GM12878 (cell line): ENCODE measurements at regions of chr1 and their contacts with region 1.

Region 1: GRCh38 chr1:156728597-156729462 is at the start of gene ISG20L2:
- DNase-seq: peak; percentile 92
- ATAC-seq: peak; percentile 85
- H3K4me3 ChIP-seq: peak within 1 kb of the TSS; percentile 100
- H3K27ac ChIP-seq: peak within 1 kb of the TSS; percentile 91
- H3K4me1 ChIP-seq: peaks cover 9% of the 10 kb centered on the region
- H3K27me3 ChIP-seq: no peaks in the 10 kb centered on the region
- CTCF ChIP-seq: no peak; a peak in 1 of 6 replicates
- EP300 ChIP-seq: peak in 1 of 2 experiments; percentile 14; a peak in 1 of 4 replicates
- POLR2A ChIP-seq: peak; percentile 92
- RAD21 ChIP-seq: no peak
- polyA plus RNA-seq, gene ISG20L2: 16.4 to 26.1 TPM

Region 2: DNA sequence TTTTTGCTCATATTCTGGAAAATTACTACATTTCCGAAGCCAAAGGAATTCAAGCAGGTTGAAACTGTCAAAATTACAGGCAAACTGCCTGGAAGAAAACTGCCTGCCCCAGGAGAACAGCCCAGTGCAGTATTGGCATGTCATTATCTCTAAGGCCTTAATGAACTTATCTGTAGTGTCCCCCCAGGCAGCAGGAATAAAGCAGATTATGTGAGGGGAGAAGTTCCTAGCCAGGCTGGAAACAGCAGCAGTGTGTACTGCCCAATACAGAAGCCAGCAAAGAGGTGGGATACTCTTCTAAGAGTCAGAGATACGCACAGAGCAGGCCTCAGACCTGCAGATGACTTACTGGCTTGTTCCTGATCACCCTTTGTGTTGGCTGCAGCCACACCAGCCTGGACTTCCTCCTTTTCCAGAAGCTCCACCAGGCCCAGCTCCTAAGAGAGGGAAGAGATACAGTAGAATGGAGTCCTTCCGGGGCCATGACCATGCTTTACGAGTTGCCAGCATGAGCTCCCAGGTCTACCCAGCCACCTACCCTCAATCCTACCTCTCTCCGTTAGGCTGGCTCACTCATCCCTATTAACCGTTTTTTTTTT is 168.1 kb before region 1 on chr1:
- CTCF ChIA-PET with region 1: no interaction called
- POLR2A ChIA-PET with region 1: no interaction called
- RAD21 ChIA-PET with region 1: no interaction called
- SMC1A ChIA-PET with region 1: no interaction called
- in situ Hi-C with region 1: no loop called
- intact Hi-C with region 1: no loop called
- DNase-seq: no peak
- ATAC-seq: no peak
- H3K4me3 ChIP-seq: no peak overlapping the region
- H3K27ac ChIP-seq: no peak overlapping the region
- H3K4me1 ChIP-seq: no peaks in the 10 kb centered on the region
- H3K27me3 ChIP-seq: no peaks in the 10 kb centered on the region
- CTCF ChIP-seq: no peak
- EP300 ChIP-seq: no peak
- POLR2A ChIP-seq: no peak
- RAD21 ChIP-seq: no peak

Region 3: DNA sequence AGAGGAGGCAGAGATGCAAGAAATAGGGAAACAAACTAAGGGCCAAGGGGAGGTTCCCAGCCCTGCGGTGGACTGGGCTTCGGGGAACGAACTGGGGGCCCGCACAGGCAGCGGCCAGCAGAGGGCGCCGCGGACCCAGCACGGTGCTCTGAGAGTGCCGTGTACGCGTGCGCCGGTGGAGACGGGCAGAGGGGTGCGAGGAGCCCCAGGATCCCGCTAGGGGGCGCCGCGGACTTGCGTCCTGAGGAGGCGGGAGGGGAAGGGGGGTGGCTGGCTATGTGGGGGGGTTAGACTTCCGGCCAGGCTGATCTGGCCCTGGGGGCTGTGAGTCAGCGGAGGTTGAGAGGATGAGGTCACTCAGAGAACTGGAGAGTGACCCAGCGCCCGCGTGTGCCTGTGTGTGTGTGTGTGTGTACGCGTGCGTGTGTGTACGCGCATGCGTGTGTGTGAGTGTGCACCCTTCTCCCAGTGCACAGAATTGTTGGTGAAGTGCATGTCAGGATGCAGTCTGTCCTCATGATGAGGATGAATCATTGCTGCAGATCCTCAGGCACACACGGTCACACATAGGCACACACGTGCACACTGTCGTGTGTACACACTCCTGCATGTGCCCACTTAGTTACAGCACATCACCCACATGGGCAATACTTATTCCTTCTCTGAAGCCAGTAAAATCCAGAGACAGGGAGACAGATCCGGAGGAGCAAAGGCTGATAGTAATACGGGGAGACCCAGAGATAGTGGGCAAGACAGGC is 68.7 kb before region 1 on chr1:
- CTCF ChIA-PET with region 1: interaction called, 101 read pairs
- POLR2A ChIA-PET with region 1: interaction called, 13 read pairs
- RAD21 ChIA-PET with region 1: interaction called, 39 read pairs
- SMC1A ChIA-PET with region 1: interaction called, 39 read pairs
- in situ Hi-C with region 1: no loop called
- intact Hi-C with region 1: loop called (anchors 10 kb)
- DNase-seq: peak; percentile 70
- ATAC-seq: peak; percentile 84
- H3K4me3 ChIP-seq: peak overlapping the region; percentile 94
- H3K27ac ChIP-seq: peak overlapping the region; percentile 90
- H3K4me1 ChIP-seq: peaks cover 74% of the 10 kb centered on the region
- H3K27me3 ChIP-seq: 0 out of 4 replicates have a peak, but pooled peaks cover 0 to 2% of the 10 kb centered on the region in 2 experiments
- CTCF ChIP-seq: peak; percentile 99 to 100 (median 100); a peak in 5 of 6 replicates
- EP300 ChIP-seq: no peak
- POLR2A ChIP-seq: peak; percentile 69
- RAD21 ChIP-seq: peak; percentile 81

Region 4: DNA sequence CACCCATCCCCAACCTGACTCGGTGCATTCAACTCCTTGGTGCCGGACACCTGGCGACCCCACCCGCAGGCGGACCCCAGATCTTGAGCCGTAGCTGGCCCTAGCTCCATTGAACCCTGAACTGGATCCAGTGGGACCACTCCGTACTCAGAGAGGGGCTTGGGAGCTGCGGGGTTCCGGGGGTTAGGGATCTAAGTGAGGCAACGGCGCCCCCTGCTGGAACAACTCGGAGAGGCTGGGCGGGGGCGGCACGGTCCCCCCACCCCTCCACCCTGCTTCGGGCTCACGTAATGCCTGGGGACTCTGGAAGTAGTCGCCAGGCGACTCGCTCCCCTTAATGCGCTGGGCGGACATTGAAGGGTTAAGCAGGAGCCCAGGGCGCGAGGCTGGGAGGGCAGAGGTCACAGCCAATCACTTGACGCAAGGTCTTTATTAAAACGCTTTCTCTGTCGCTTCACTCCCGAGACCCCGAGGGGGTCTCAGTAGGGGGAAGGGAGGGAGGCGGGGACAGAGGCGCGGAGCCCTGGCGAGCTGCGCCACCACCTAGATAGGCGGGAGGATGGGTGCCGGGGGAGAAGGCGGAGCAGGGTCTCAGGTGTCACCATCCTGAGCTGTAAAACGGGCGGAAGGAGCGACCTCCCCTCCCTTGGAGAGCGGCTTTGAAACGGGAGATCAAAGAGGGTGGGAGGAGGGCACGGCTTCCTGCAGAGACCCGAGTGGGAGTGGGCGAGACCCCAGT is 22.7 kb before region 1 on chr1:
- CTCF ChIA-PET with region 1: interaction called, 53 read pairs
- POLR2A ChIA-PET with region 1: interaction called, 4 read pairs
- RAD21 ChIA-PET with region 1: interaction called, 15 read pairs
- SMC1A ChIA-PET with region 1: interaction called, 8 read pairs
- in situ Hi-C with region 1: no loop called
- intact Hi-C with region 1: no loop called
- DNase-seq: no peak
- ATAC-seq: peak; percentile 81
- H3K4me3 ChIP-seq: peak overlapping the region; percentile 35; the same call in 1 of the 2 replicates
- H3K27ac ChIP-seq: no peak overlapping the region
- H3K4me1 ChIP-seq: peaks cover 6% of the 10 kb centered on the region
- H3K27me3 ChIP-seq: peaks cover 10 to 15% of the 10 kb centered on the region in 2 experiments
- CTCF ChIP-seq: peak; percentile 60 to 74 (median 67)
- EP300 ChIP-seq: no peak
- POLR2A ChIP-seq: peak; percentile 11; the same call in 1 of the 2 replicates
- RAD21 ChIP-seq: peak; percentile 53

Region 5: DNA sequence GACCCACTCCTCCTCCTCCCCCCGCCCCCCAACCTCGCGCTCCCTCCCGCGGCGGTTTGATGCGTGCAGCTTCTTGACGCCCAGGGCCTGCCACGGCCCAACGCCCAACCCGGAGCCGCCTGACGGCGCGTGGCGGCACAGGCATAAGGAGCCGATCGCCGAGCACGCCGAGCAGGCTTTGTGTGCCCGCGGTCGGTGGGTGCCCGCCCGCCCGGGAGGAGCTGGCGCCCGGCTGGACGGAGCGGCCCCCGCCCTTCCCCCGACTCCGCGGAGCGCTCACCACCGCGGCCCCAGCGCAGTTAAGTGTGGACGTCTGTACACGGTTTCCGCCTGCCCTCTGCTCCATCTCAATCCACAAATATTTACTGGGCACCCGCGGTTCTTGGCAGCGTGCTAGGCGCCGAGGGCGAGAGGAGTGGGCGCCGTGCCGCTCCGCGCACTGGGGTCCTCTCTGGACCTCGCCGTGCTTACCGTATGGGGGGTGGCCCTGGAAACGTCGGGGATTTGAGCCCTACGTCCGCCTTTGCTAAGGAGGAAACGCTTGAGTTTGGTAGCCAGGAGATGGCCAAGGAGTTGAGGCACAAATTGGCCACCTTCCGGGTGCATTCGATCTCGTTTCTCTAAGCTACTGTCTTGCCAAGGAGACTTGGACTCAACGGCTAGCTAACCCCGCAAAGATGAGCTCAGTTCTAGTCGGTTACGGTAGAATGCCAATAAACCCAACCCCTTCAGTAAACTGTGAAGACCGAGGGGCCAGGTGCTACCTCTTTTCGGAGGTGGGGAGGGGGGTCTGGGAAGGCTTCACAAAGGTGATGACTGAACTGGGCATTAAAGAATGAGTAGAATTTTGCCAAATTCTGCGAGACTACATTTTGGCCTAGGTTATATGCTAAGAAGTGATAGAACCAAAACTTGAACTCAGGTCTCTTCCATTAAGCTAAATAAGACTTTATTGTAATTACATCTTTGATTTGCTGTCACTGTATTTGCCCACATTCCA is 23.2 kb after region 1 on chr1:
- CTCF ChIA-PET with region 1: interaction called, 56 read pairs
- POLR2A ChIA-PET with region 1: interaction called, 45 read pairs
- RAD21 ChIA-PET with region 1: interaction called, 34 read pairs
- SMC1A ChIA-PET with region 1: interaction called, 43 read pairs
- in situ Hi-C with region 1: no loop called
- intact Hi-C with region 1: loop called (anchors 2 kb)
- DNase-seq: peak; percentile 82
- ATAC-seq: peak; percentile 80
- H3K4me3 ChIP-seq: peak overlapping the region; percentile 81
- H3K27ac ChIP-seq: peak overlapping the region; percentile 99
- H3K4me1 ChIP-seq: peaks cover 25% of the 10 kb centered on the region
- H3K27me3 ChIP-seq: no peaks in the 10 kb centered on the region
- CTCF ChIP-seq: 0 out of 6 replicates have a peak, but pooled peaks of 1 of the 3 experiments have one; percentile 3
- EP300 ChIP-seq: no peak
- POLR2A ChIP-seq: peak; percentile 84
- RAD21 ChIP-seq: no peak

Region 6: GRCh38 chr1:156797212-156797871 is 68.5 kb after region 1 on chr1:
- CTCF ChIA-PET with region 1: interaction called, 162 read pairs
- POLR2A ChIA-PET with region 1: interaction called, 3 read pairs
- RAD21 ChIA-PET with region 1: interaction called, 42 read pairs
- SMC1A ChIA-PET with region 1: interaction called, 60 read pairs
- in situ Hi-C with region 1: no loop called
- intact Hi-C with region 1: no loop called
- DNase-seq: no peak
- ATAC-seq: peak; percentile 94
- H3K4me3 ChIP-seq: no peak overlapping the region
- H3K27ac ChIP-seq: no peak overlapping the region
- H3K4me1 ChIP-seq: peaks cover 17% of the 10 kb centered on the region
- H3K27me3 ChIP-seq: no peaks in the 10 kb centered on the region
- CTCF ChIP-seq: peak; percentile 78 to 88 (median 82)
- EP300 ChIP-seq: no peak
- POLR2A ChIP-seq: no peak
- RAD21 ChIP-seq: peak; percentile 84

Region 7: GRCh38 chr1:156838981-156839410 is 110.2 kb after region 1 on chr1:
- CTCF ChIA-PET with region 1: interaction called, 55 read pairs
- POLR2A ChIA-PET with region 1: interaction called, 8 read pairs
- RAD21 ChIA-PET with region 1: interaction called, 34 read pairs
- SMC1A ChIA-PET with region 1: interaction called, 27 read pairs
- in situ Hi-C with region 1: no loop called
- intact Hi-C with region 1: no loop called
- DNase-seq: no peak
- ATAC-seq: peak; percentile 57
- H3K4me3 ChIP-seq: no peak overlapping the region
- H3K27ac ChIP-seq: no peak overlapping the region
- H3K4me1 ChIP-seq: peaks cover 24% of the 10 kb centered on the region
- H3K27me3 ChIP-seq: no peaks in the 10 kb centered on the region; a peak in 1 of 4 replicates
- CTCF ChIP-seq: peak; percentile 80 to 94 (median 91)
- EP300 ChIP-seq: no peak
- POLR2A ChIP-seq: no peak
- RAD21 ChIP-seq: peak; percentile 86

Region 8: DNA sequence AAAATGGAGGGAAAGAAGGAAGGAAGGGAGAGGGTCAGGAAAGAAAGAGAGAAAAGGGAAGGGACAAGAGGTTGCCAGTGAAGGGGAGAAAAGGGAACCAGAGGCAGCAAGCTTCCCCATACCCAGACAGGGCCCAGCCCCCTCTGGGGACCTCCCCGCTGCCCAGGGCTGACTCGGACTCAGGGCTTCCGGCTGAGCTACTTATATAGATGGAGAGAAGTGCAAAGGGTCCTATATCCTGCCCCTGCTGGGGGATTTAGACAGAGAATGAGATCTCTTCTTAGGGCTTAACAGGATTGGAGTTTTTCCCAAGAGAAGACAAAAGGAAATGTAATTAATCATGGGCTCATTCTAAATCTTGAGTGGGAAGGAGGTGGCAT is 370.8 kb after region 1 on chr1 and contains the start of gene ETV3L:
- CTCF ChIA-PET with region 1: no interaction called
- POLR2A ChIA-PET with region 1: no interaction called
- RAD21 ChIA-PET with region 1: no interaction called
- SMC1A ChIA-PET with region 1: no interaction called
- in situ Hi-C with region 1: no loop called
- intact Hi-C with region 1: no loop called
- DNase-seq: no peak
- ATAC-seq: peak; percentile 76
- H3K4me3 ChIP-seq: no peak within 1 kb of the TSS
- H3K27ac ChIP-seq: no peak within 1 kb of the TSS
- H3K4me1 ChIP-seq: peaks cover 6% of the 10 kb centered on the region
- H3K27me3 ChIP-seq: no peaks in the 10 kb centered on the region; a peak in 1 of 4 replicates
- CTCF ChIP-seq: no peak
- EP300 ChIP-seq: no peak
- POLR2A ChIP-seq: no peak
- RAD21 ChIP-seq: no peak
- polyA plus RNA-seq, gene ETV3L: 0.03 to 0.04 TPM